HAP-1 (cell line): ENCODE measurements at regions of chr1 and their contacts with region 1.

Region 1: GRCh38 chr1:206489980-206490770 is 17.2 kb upstream of the RASSF5 start:
- DNase-seq: peak; percentile 69 to 90
- H3K4me3 ChIP-seq: no peak overlapping the region
- H3K4me1 ChIP-seq: no peaks in the 10 kb centered on the region
- H3K27me3 ChIP-seq: no peaks in the 10 kb centered on the region

Region 2: DNA sequence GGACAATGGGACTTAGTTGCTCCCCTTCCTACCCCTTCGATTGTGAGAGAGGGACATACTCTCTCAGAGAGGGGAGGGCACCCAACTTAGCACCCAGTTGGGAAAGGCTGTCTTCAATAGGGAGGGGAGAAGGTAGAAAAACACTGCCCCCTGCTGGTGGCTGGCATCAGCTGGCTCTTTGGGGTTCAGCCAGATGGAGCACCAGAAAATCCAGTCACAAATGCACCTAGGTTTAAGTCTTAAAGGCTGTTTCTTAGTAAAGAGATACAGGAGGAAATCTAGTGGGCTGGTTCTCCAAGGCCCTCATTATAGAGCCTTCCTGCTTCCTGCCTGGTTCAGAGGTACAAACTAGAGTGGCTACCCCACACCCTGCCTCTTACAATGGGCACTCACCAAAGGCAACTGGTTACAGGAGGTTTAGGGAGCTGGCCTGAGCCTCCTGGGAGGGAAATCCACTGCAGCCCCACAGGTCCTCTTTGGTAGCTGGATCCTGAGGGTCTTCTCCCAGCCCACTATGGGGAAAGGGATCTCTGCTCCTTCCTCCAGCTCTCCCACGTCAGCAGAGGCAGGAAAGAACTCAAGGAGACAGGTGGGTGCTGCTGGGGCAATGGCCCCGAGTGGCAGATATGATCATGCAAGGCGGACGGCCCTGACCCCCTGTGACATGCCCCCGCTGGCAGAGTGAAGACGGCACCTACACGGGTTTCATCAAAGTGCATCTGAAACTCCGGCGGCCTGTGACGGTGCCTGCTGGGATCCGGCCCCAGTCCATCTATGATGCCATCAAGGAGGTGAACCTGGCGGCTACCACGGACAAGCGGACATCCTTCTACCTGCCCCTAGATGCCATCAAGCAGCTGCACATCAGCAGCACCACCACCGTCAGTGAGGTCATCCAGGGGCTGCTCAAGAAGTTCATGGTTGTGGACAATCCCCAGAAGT is 93.8 kb after region 1 on chr1:
- in situ Hi-C with region 1: loop called (anchors 5 kb)
- DNase-seq: peak; percentile 11 to 85
- H3K4me3 ChIP-seq: no peak overlapping the region
- H3K4me1 ChIP-seq: no peaks in the 10 kb centered on the region
- H3K27me3 ChIP-seq: no peaks in the 10 kb centered on the region

Region 3: DNA sequence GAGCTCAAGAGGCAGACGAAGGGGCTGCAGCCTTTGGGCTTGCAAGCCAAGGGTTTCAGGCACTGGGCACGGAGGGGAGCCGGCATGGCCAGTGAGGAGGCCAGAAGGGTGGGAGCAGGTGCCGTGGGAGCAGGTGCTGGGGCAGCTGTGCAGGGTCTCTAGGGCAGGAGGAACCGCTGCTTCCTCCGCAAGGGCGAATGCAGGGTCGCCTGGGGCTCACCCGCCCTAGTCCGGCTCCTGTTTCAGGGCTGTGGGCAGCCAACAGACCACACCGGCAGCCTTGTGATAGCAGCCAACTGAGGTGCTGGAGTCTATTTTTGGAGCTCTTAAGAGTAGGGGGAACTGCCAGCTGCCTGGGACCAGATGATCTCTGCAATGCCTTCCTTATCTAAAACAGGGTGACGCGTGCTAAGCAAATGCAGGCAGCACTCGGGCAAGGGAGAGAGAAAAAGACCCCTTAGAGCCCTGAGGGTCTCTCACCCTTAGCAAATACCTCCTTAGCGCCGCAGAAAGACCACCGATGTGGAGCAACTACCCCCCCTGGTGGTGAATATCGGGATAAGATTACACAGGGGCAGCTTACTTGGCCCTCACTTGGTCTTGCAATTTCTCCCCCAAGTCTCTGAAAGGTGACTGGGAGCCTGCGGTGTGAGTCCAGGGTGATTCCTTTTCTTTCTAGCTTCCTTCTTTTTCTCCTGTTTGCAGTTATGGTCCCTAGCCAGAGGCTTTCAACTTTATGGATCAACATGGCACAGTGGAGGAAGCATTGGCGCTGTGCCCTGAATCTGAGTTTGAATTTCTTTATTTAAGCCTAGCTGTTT is 173.9 kb after region 1 on chr1:
- in situ Hi-C with region 1: loop called (anchors 5 kb)
- DNase-seq: peak; percentile 50 to 86
- H3K4me3 ChIP-seq: peak overlapping the region; percentile 7; the same call in 1 of the 2 replicates
- H3K4me1 ChIP-seq: no peaks in the 10 kb centered on the region; the same call in 1 of the 2 replicates
- H3K27me3 ChIP-seq: peaks cover 34% of the 10 kb centered on the region

Region 4: GRCh38 chr1:206935491-206936067 is 445.4 kb after region 1 on chr1:
- in situ Hi-C with region 1: no loop called
- DNase-seq: peak; percentile 8 to 72
- H3K4me3 ChIP-seq: no peak overlapping the region
- H3K4me1 ChIP-seq: no peaks in the 10 kb centered on the region
- H3K27me3 ChIP-seq: no peaks in the 10 kb centered on the region